ENCODE measurements at regions of chr1 and their contacts with region 1.

Region 1: DNA sequence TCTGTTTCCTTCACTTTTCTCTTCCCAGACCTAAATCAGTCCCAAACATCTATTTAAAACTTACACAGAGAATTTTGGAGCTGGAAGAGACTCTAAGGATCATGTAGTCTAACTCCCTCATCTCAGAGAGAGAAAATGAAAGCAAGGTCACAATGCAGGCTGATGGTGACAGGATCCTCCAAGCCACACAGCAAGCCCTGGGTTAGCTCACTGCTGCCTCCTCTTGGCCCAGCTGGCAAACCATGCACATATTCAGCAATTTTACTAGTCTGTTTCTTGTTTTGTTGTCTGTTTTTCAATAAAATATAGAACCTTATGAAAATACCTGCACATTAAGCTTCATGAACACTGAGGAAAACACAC is 27.7 kb upstream of the LY9 start:
- DNase-seq: peak; percentile 72 to 94 (median 85)
- ATAC-seq: peak; percentile 92
- H3K4me3 ChIP-seq: peak overlapping the region; percentile 31 to 41
- H3K4me3 Mint-ChIP-seq: peak overlapping the region; percentile 82
- H3K27ac ChIP-seq: peak overlapping the region; percentile 33 to 85
- H3K27ac Mint-ChIP-seq: peak overlapping the region; percentile 96
- H3K4me1 ChIP-seq: peaks cover 18% of the 10 kb centered on the region
- H3K4me1 Mint-ChIP-seq: peaks cover 20% of the 10 kb centered on the region
- H3K27me3 ChIP-seq: no peaks in the 10 kb centered on the region
- H3K27me3 Mint-ChIP-seq: no peaks in the 10 kb centered on the region
- CTCF ChIP-seq: peak; percentile 92

Region 2: GRCh38 chr1:160711602-160712311 is 56.5 kb before region 1 on chr1 and contains the start of gene CD48:
- CTCF ChIA-PET with region 1: interaction called, 53 read pairs
- POLR2A ChIA-PET with region 1: interaction called, 5 read pairs
- intact Hi-C with region 1: no loop called
- DNase-seq: peak in 7 of 9 experiments; percentile 37 to 89 (median 67)
- ATAC-seq: peak; percentile 32
- H3K4me3 ChIP-seq: peak within 1 kb of the TSS; percentile 84 to 89
- H3K4me3 Mint-ChIP-seq: no peak within 1 kb of the TSS
- H3K27ac ChIP-seq: peak within 1 kb of the TSS; percentile 76 to 93
- H3K27ac Mint-ChIP-seq: no peak within 1 kb of the TSS
- H3K4me1 ChIP-seq: peaks cover 58% of the 10 kb centered on the region
- H3K4me1 Mint-ChIP-seq: peaks cover 46% of the 10 kb centered on the region
- H3K27me3 ChIP-seq: no peaks in the 10 kb centered on the region
- H3K27me3 Mint-ChIP-seq: no peaks in the 10 kb centered on the region
- CTCF ChIP-seq: no peak
- total RNA-seq, gene CD48: 397 to 399 TPM

Region 3: GRCh38 chr1:160748181-160748877 is 19.9 kb before region 1 on chr1:
- CTCF ChIA-PET with region 1: interaction called, 72 read pairs
- POLR2A ChIA-PET with region 1: interaction called, 16 read pairs
- intact Hi-C with region 1: loop called in 1 of 2 experiments (anchors 2 kb)
- DNase-seq: no peak
- ATAC-seq: no peak
- H3K4me3 ChIP-seq: no peak overlapping the region
- H3K4me3 Mint-ChIP-seq: no peak overlapping the region
- H3K27ac ChIP-seq: peak overlapping the region in 1 of 2 experiments; percentile 38
- H3K27ac Mint-ChIP-seq: peak overlapping the region; percentile 24
- H3K4me1 ChIP-seq: peaks cover 72% of the 10 kb centered on the region
- H3K4me1 Mint-ChIP-seq: peaks cover 86% of the 10 kb centered on the region
- H3K27me3 ChIP-seq: no peaks in the 10 kb centered on the region
- H3K27me3 Mint-ChIP-seq: no peaks in the 10 kb centered on the region
- CTCF ChIP-seq: no peak

Region 4: DNA sequence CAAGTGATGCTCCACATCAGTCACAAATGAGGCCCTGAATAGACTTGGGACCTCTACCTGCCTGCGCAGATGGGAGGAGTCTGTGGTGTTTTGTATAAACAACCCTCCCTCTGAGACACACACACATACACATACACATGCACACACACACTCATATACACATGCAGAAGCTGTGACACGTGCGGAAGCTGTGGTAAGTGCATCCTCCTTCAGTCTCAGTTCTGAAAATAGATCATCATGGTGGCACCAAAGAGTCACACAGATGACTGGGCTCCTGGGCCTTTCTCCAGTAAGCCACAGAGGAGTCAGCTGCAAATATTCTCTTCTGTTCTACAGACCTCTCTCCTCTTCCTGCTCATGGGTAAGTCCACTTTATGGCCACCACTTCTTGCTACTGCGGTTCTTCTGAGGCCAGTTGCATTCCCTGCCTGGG is 27.7 kb after region 1 on chr1 and contains the start of gene LY9:
- CTCF ChIA-PET with region 1: interaction called, 13 read pairs
- POLR2A ChIA-PET with region 1: interaction called, 3 read pairs
- intact Hi-C with region 1: no loop called
- DNase-seq: peak; percentile 65 to 97 (median 77)
- ATAC-seq: peak; percentile 90
- H3K4me3 ChIP-seq: peak within 1 kb of the TSS; percentile 71 to 74
- H3K4me3 Mint-ChIP-seq: peak within 1 kb of the TSS; percentile 97
- H3K27ac ChIP-seq: peak within 1 kb of the TSS; percentile 75 to 85
- H3K27ac Mint-ChIP-seq: peak within 1 kb of the TSS; percentile 99
- H3K4me1 ChIP-seq: peaks cover 30% of the 10 kb centered on the region
- H3K4me1 Mint-ChIP-seq: peaks cover 54% of the 10 kb centered on the region
- H3K27me3 ChIP-seq: no peaks in the 10 kb centered on the region
- H3K27me3 Mint-ChIP-seq: no peaks in the 10 kb centered on the region
- CTCF ChIP-seq: no peak
- total RNA-seq, gene LY9: 103 to 104 TPM

Measured in CD8-positive, alpha-beta T cell (primary cell).